ENCODE measurements at regions of chr1 and their contacts with region 1.

Region 1: DNA sequence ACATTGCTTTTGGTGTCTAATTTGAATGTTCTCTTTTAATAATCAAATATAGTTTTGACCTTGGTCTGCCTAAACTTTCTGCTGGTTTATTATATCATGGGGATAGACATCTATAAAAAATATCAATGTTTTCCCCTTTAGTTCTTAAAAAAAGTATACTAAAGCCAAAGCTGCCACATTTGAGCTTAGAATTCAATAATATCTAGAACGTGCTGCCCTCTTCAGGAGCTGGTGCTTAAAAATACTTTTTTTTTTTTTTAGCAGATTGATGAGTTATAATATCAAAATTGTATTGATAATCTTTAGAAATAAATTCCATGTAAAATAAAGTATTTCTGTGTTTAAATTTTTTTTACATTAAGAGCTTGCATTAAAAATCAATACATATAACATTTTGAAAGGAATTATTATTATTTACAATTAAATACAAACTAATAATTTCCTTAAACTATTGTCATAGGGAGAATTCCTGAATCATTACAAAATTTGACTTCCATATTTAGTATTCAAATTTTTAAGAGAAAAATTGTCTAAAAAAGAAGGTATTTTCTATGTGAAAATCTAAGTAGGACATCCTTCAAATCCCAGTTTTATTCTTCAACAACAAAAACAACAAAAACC is 40.1 kb upstream of the ADGRL2 start:
- DNase-seq: no peak
- ATAC-seq: no peak
- H3K4me3 ChIP-seq: no peak overlapping the region
- H3K27ac ChIP-seq: no peak overlapping the region
- H3K4me1 ChIP-seq: peaks cover 0 to 14% (median 0%) of the 10 kb centered on the region in 9 donors
- H3K27me3 ChIP-seq: no peaks in the 10 kb centered on the region
- CTCF ChIP-seq: peak in 8 of 9 donors; percentile 21 to 65 (median 54)

Region 2: DNA sequence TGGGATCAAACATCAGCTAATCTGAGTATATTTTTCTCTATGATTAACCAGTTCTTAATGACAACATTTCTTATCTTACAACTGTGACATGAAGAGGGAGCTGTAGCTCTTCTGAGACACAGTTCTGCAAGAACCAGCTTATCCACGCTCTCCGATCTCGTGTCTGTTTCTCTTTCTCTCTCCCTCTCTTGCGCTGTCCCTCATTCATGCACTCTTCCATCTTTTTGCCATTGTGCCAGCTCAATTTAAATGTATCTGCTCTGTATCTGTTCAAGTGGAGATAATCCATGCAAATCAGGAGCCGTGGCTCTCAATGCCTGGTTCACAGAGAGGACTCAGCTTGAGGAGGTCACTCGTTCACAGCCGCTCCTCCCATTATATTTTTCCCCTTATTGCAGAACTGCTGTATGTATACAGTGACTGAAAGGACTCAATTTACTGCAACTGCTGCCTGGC is 454.6 kb before region 1 on chr1:
- intact Hi-C with region 1: loop called in 3 of 10 experiments (anchors 10 kb)
- DNase-seq: peak in 1 of 2 donors; percentile 24
- ATAC-seq: peak; percentile 84 to 94 (median 91)
- H3K4me3 ChIP-seq: peak overlapping the region; percentile 26 to 64 (median 55)
- H3K27ac ChIP-seq: peak overlapping the region in 6 of 10 donors; percentile 13 to 55 (median 18)
- H3K4me1 ChIP-seq: no peaks in the 10 kb centered on the region
- H3K27me3 ChIP-seq: no peaks in the 10 kb centered on the region
- CTCF ChIP-seq: peak in 8 of 9 donors; percentile 32 to 76 (median 56)

Region 3: GRCh38 chr1:81549604-81550127 is 210.9 kb before region 1 on chr1:
- intact Hi-C with region 1: loop called in 6 of 10 experiments (anchors 5 to 10 kb)
- DNase-seq: no peak
- ATAC-seq: peak in 6 of 8 donors; percentile 59 to 75 (median 68)
- H3K4me3 ChIP-seq: no peak overlapping the region
- H3K27ac ChIP-seq: no peak overlapping the region
- H3K4me1 ChIP-seq: peaks cover 0 to 13% (median 0%) of the 10 kb centered on the region in 9 donors
- H3K27me3 ChIP-seq: no peaks in the 10 kb centered on the region
- CTCF ChIP-seq: peak; percentile 6 to 66 (median 48)

Region 4: GRCh38 chr1:81811757-81812371 is 51.3 kb after region 1 on chr1:
- intact Hi-C with region 1: no loop called
- DNase-seq: no peak
- ATAC-seq: peak in 1 of 8 donors; percentile 38
- H3K4me3 ChIP-seq: peak overlapping the region in 1 of 10 donors; percentile 1
- H3K27ac ChIP-seq: peak overlapping the region in 1 of 10 donors; percentile 24
- H3K4me1 ChIP-seq: peaks cover 0 to 89% (median 67%) of the 10 kb centered on the region in 9 donors
- H3K27me3 ChIP-seq: no peaks in the 10 kb centered on the region
- CTCF ChIP-seq: peak in 8 of 9 donors; percentile 9 to 52 (median 32)

Region 5: GRCh38 chr1:81834921-81835698 is 74.5 kb after region 1 on chr1:
- intact Hi-C with region 1: no loop called
- DNase-seq: peak in 1 of 2 donors; percentile 41
- ATAC-seq: peak; percentile 68 to 93 (median 88)
- H3K4me3 ChIP-seq: peak overlapping the region in 4 of 10 donors; percentile 1 to 28 (median 3)
- H3K27ac ChIP-seq: peak overlapping the region in 4 of 10 donors; percentile 2 to 29 (median 18)
- H3K4me1 ChIP-seq: peaks cover 0 to 66% (median 44%) of the 10 kb centered on the region in 9 donors
- H3K27me3 ChIP-seq: no peaks in the 10 kb centered on the region
- CTCF ChIP-seq: no peak

Measured in heart right ventricle (tissue), 16 donors.